ENCODE measurements at regions of chr14 and their contacts with region 1.

Region 1: DNA sequence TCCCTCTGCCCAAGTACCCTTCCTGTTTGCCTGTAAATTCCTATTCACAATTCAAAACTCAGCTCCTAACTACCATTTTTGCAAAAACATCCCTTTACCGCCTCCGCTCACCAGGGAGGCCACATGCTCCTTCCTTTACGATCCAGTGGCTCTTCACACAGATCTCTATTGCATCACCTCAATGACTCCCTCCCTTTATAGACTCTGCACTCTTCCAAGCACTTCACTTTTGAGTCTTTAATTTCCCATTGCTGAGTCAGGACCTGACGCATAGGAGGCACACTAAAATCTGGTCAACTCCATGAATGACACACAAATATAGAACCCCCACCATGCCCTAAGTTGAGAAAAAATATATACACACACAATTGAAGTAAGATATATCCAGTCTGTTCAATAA is 45.9 kb downstream of the PPP1R13B start:
- DNase-seq: no peak
- H3K4me3 ChIP-seq: no peak overlapping the region
- H3K27ac ChIP-seq: no peak overlapping the region
- H3K4me1 ChIP-seq: 0 out of 4 replicates have a peak, but pooled peaks cover 0 to 4% of the 10 kb centered on the region in 2 experiments
- H3K27me3 ChIP-seq: no peaks in the 10 kb centered on the region
- CTCF ChIP-seq: no peak
- EP300 ChIP-seq: no peak
- RAD21 ChIP-seq: no peak

Region 2: GRCh38 chr14:103984196-103984595 is 182.7 kb after region 1 on chr14:
- CTCF ChIA-PET with region 1: interaction called, 15 read pairs
- POLR2A ChIA-PET with region 1: no interaction called
- DNase-seq: no peak
- H3K4me3 ChIP-seq: no peak overlapping the region
- H3K27ac ChIP-seq: no peak overlapping the region
- H3K4me1 ChIP-seq: no peaks in the 10 kb centered on the region
- H3K27me3 ChIP-seq: no peaks in the 10 kb centered on the region; the same call in 1 of the 2 replicates
- CTCF ChIP-seq: no peak
- EP300 ChIP-seq: no peak
- RAD21 ChIP-seq: no peak

Measured in SK-N-SH (cell line).